Mammary epithelial cell (primary cell): ENCODE measurements at regions of chr11 and their contacts with region 1.

Region 1: DNA sequence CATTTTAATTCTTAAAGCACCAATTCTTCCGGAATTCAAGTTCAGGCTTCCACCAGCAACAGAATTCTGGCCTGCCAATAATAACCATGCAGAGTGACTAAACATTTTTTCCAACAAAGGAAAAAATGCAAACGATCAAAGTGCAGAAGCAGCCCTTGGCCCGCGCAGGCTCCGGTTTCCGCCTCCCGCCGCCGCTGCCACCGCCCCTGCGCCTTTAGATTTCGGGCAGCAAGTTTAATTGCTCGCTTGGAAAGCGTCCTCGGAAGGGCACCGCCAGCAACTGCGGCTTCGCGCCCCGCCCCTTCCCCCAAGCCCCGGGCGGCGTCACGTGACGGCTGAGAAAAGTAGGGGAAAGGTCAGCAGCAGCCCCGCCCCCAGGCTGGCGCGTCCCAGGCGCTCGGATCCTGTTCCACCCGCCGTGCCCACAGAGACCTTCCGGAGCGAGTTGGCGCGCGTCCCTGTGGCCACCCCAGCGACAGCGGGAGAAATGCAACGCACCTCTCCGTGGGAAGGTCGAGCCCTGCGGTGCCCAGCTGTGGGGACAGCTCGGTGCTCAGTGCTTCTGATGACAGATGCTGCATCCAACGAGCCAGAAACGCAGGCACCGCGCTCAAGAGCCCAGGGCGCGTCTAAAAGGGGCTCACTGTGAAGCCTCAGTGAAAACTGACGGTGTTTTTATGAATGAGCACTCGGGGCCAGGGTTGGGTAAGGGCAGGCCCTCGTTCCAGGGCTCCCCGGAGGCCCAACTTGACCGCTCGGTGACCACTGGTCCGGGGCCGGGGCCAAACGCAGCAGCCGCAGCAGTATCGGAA is 2.5 kb downstream of the CPT1A start:
- DNase-seq: peak; percentile 89
- H3K4me3 ChIP-seq: peak overlapping the region; percentile 45 to 50 (median 49)
- H3K27ac ChIP-seq: peak overlapping the region; percentile 42
- H3K4me1 ChIP-seq: peaks cover 38% of the 10 kb centered on the region
- H3K27me3 ChIP-seq: no peaks in the 10 kb centered on the region
- CTCF ChIP-seq: peak in 1 of 2 donors; percentile 1

Region 2: GRCh38 chr11:68632802-68633201 is 206.5 kb before region 1 on chr11:
- CTCF ChIA-PET with region 1: no interaction called
- dilution Hi-C with region 1: no loop called
- in situ Hi-C with region 1: loop called in 1 of 2 experiments (anchors 25 kb)
- intact Hi-C with region 1: loop called (anchors 1 kb)
- DNase-seq: peak; percentile 50
- H3K4me3 ChIP-seq: no peak overlapping the region
- H3K27ac ChIP-seq: no peak overlapping the region
- H3K4me1 ChIP-seq: no peaks in the 10 kb centered on the region
- H3K27me3 ChIP-seq: no peaks in the 10 kb centered on the region
- CTCF ChIP-seq: peak; percentile 69 to 83

Region 3: DNA sequence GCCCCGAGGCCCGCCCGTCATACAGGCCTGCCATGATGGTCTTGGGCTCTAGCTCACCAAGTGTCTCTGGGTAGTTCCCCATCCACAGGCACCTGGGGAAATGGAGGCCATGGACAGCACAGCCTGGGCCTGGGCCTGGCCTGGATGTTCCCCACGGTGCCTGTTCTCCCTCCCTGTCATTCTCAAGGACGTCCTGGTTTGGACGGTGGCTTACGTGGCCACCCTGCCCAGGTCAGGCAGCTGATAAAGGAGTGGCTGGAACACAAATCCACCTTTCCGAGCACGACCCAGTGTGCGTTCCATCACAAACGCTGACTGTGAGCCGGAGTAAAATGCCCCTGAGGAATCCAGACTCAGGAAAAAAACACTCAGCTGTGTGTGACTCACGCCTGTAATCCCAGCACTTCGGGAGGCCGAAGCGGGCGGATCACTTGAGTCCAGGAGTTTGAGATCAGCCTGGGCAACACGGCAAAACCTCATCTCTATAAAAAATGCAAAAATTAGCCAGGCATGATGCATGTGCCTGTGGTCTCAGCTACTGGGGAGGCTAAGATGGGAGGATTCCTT is 46.8 kb before region 1 on chr11:
- CTCF ChIA-PET with region 1: no interaction called
- dilution Hi-C with region 1: no loop called
- in situ Hi-C with region 1: no loop called
- intact Hi-C with region 1: no loop called
- DNase-seq: no peak
- H3K4me3 ChIP-seq: no peak overlapping the region
- H3K27ac ChIP-seq: no peak overlapping the region
- H3K4me1 ChIP-seq: no peaks in the 10 kb centered on the region
- H3K27me3 ChIP-seq: no peaks in the 10 kb centered on the region
- CTCF ChIP-seq: no peak

Region 4: DNA sequence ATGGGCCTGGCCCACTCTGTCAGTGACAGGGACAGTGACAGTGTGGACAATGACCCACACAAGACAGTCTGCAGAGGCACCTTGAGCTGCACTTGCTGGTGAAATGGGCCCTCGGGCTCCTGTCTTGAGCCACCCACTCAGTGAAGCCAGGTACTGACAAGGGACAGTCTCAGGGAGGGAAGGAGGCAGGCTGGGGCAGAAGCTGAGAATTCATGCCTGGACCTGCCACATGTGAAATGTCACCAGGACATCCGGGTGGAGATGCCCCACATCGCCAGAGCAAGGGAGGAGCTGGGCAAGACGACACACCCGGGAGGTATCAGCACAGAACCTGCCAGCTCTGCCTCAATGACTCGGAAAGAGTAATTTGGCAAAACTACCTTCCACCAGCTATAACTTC is 21.1 kb before region 1 on chr11:
- CTCF ChIA-PET with region 1: no interaction called
- dilution Hi-C with region 1: no loop called
- in situ Hi-C with region 1: no loop called
- intact Hi-C with region 1: loop called (anchors 2 kb)
- DNase-seq: peak; percentile 61
- H3K4me3 ChIP-seq: no peak overlapping the region
- H3K27ac ChIP-seq: no peak overlapping the region
- H3K4me1 ChIP-seq: peaks cover 13% of the 10 kb centered on the region
- H3K27me3 ChIP-seq: no peaks in the 10 kb centered on the region
- CTCF ChIP-seq: no peak

Region 5: DNA sequence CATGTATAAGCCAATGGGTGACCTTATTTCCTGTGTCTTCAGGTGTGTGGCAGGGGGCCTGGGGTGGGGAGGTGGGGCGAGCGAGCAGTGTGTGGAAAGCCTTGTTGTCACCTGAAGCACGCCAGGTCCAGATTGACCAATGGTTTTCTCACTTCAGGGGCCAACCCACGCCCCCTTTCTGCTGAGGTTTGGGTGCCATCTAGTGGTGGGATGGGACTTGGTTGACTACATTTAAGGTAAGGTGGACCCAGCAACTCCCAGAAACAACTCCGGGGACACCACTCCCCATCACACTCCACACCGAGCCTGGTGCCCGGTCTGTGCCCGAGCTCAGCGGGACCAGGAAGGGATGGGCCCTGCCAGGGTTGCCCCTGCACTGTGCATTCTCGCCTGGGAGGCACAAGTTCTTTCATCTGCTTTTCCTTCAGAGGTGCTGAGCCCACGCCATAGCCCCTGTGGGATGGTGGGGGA is 249.5 kb after region 1 on chr11:
- CTCF ChIA-PET with region 1: no interaction called
- dilution Hi-C with region 1: no loop called
- in situ Hi-C with region 1: no loop called
- intact Hi-C with region 1: loop called (anchors 5 kb)
- DNase-seq: peak; percentile 70
- H3K4me3 ChIP-seq: no peak overlapping the region
- H3K27ac ChIP-seq: no peak overlapping the region
- H3K4me1 ChIP-seq: peaks cover 7% of the 10 kb centered on the region
- H3K27me3 ChIP-seq: no peaks in the 10 kb centered on the region
- CTCF ChIP-seq: peak; percentile 74 to 81